Body of pancreas (tissue), 4 donors: ENCODE measurements at regions of chr17 and their contacts with region 1.

Region 1: GRCh38 chr17:40909761-40910498 is 24.9 kb upstream of the KRT20 start:
- DNase-seq: no peak
- ATAC-seq: no peak
- H3K4me3 ChIP-seq: no peak overlapping the region
- H3K27ac ChIP-seq: no peak overlapping the region
- H3K4me1 ChIP-seq: no peaks in the 10 kb centered on the region
- H3K27me3 ChIP-seq: no peaks in the 10 kb centered on the region
- CTCF ChIP-seq: no peak
- POLR2A ChIP-seq: no peak

Region 2: DNA sequence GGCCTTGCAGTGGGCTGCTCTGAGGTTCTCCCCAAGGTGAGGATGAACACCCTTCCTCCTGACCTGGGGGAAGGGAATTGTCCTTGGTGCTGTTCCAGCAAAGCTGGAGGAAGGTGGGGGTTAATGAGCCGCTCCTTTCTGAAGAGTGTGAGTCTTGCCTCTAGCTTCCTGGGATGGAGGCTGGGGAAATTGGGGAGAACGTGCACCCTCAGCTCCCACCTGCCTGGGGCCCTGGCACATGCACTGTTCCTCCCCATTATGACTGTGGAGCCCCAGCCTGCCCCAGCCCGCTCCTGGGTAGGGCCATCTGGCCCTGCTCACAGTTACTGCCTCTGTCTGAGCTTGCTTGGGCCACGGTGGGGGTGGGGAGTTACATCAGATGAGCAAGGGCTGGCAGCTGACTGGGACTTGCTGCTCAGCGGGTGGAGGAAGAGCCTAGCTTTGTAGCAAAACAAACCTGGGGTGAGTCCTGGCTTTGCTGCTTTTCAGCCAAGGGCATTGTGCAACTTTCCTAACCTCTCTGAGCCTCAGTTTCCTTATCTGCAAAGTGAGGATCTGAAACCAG is 419.6 kb before region 1 on chr17:
- intact Hi-C with region 1: no loop called
- DNase-seq: peak; percentile 30 to 52 (median 48)
- ATAC-seq: peak; percentile 34
- H3K4me3 ChIP-seq: no peak overlapping the region
- H3K27ac ChIP-seq: peak overlapping the region; percentile 55 to 87 (median 78)
- H3K4me1 ChIP-seq: peaks cover 14% of the 10 kb centered on the region
- H3K27me3 ChIP-seq: no peaks in the 10 kb centered on the region
- CTCF ChIP-seq: no peak
- POLR2A ChIP-seq: peak in 1 of 3 donors; percentile 2

Region 3: GRCh38 chr17:40818733-40819527 is 91.0 kb before region 1 on chr17:
- intact Hi-C with region 1: no loop called
- DNase-seq: peak; percentile 78 to 84 (median 80)
- ATAC-seq: peak; percentile 96
- H3K4me3 ChIP-seq: peak overlapping the region; percentile 40 to 59
- H3K27ac ChIP-seq: peak overlapping the region; percentile 77 to 89 (median 84)
- H3K4me1 ChIP-seq: peaks cover 15% of the 10 kb centered on the region
- H3K27me3 ChIP-seq: no peaks in the 10 kb centered on the region
- CTCF ChIP-seq: no peak
- POLR2A ChIP-seq: peak; percentile 34 to 40 (median 39)

Region 4: GRCh38 chr17:40854159-40854814 is 55.6 kb before region 1 on chr17:
- intact Hi-C with region 1: no loop called
- DNase-seq: no peak
- ATAC-seq: no peak
- H3K4me3 ChIP-seq: no peak overlapping the region
- H3K27ac ChIP-seq: no peak overlapping the region
- H3K4me1 ChIP-seq: peaks cover 5% of the 10 kb centered on the region
- H3K27me3 ChIP-seq: no peaks in the 10 kb centered on the region
- CTCF ChIP-seq: no peak
- POLR2A ChIP-seq: no peak

Region 5: GRCh38 chr17:41655611-41656351 is 745.9 kb after region 1 on chr17:
- intact Hi-C with region 1: loop called (anchors 5 kb)
- DNase-seq: peak; percentile 45 to 73 (median 68)
- ATAC-seq: peak; percentile 19
- H3K4me3 ChIP-seq: no peak overlapping the region
- H3K27ac ChIP-seq: peak overlapping the region in 3 of 4 donors; percentile 10 to 69 (median 60)
- H3K4me1 ChIP-seq: peaks cover 32% of the 10 kb centered on the region
- H3K27me3 ChIP-seq: no peaks in the 10 kb centered on the region
- CTCF ChIP-seq: no peak
- POLR2A ChIP-seq: no peak